ENCODE measurements at regions of chr15 and their contacts with region 1.

Region 1: GRCh38 chr15:82398785-82399184 is 30.8 kb upstream of the GOLGA6L9 start:
- DNase-seq: no peak
- H3K4me3 Mint-ChIP-seq: no peak overlapping the region
- H3K27ac Mint-ChIP-seq: no peak overlapping the region
- H3K4me1 Mint-ChIP-seq: no peaks in the 10 kb centered on the region
- H3K27me3 Mint-ChIP-seq: no peaks in the 10 kb centered on the region
- CTCF ChIP-seq: no peak

Region 2: DNA sequence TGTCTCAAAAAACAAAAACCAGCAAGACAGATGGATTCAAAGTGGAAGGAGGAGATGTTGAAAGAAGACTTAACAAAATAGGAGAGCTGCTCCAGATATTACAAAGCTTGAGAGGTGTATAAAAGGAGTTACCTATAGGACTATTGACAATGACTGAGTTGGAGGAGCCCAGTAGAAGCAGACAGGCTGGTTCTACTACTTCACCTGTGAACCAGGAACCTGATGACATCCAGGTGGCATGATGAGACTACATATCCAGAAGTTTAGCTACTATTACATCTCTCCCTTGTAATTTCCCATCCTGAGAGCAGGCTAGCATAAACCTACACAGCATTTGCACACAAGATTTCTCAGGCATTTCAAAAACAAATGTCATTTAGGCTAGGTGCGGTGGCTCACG is 199.0 kb after region 1 on chr15:
- CTCF ChIA-PET with region 1: interaction called, 10 read pairs
- intact Hi-C with region 1: no loop called
- DNase-seq: no peak
- H3K4me3 Mint-ChIP-seq: no peak overlapping the region
- H3K27ac Mint-ChIP-seq: no peak overlapping the region
- H3K4me1 Mint-ChIP-seq: no peaks in the 10 kb centered on the region
- H3K27me3 Mint-ChIP-seq: no peaks in the 10 kb centered on the region
- CTCF ChIP-seq: no peak